GM12878 (cell line): ENCODE measurements at regions of chr18 and their contacts with region 1.

Region 1: DNA sequence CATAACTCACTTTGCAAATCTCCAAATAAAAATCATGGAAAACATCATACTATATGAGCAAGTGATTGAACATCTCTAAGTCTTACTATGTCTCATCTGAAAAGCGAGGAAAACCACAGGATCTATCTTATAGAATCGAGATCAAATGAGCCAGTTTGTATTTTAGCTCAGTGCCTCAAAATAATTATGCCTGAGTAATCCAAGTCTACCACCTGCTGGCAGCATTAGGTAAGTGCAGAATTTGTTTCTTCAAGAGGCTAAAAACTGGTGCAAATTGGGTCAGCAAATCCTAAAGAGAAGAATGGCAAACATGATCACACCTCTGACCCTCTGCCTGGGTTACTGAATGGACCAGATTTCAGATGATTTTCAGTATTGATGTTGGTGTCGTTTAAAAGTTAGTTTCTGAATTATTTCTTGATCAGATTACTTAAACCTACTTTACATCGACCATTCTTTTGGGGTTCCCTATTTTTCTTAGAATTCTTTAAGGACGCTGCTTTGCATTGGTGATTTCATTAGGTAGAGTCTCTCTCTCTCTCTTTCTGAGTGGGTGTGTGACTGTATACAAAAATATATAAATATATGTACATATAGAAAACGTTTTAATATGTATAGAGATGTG is 12.7 kb upstream of the FHOD3 start:
- DNase-seq: peak; percentile 40
- ATAC-seq: peak; percentile 83
- H3K4me3 ChIP-seq: no peak overlapping the region
- H3K27ac ChIP-seq: no peak overlapping the region
- H3K4me1 ChIP-seq: no peaks in the 10 kb centered on the region
- H3K27me3 ChIP-seq: peaks cover 0 to 2% of the 10 kb centered on the region in 2 experiments; a peak in 2 of 4 replicates
- CTCF ChIP-seq: peak; percentile 76 to 92 (median 83)
- EP300 ChIP-seq: no peak
- POLR2A ChIP-seq: no peak
- RAD21 ChIP-seq: peak; percentile 99

Region 2: DNA sequence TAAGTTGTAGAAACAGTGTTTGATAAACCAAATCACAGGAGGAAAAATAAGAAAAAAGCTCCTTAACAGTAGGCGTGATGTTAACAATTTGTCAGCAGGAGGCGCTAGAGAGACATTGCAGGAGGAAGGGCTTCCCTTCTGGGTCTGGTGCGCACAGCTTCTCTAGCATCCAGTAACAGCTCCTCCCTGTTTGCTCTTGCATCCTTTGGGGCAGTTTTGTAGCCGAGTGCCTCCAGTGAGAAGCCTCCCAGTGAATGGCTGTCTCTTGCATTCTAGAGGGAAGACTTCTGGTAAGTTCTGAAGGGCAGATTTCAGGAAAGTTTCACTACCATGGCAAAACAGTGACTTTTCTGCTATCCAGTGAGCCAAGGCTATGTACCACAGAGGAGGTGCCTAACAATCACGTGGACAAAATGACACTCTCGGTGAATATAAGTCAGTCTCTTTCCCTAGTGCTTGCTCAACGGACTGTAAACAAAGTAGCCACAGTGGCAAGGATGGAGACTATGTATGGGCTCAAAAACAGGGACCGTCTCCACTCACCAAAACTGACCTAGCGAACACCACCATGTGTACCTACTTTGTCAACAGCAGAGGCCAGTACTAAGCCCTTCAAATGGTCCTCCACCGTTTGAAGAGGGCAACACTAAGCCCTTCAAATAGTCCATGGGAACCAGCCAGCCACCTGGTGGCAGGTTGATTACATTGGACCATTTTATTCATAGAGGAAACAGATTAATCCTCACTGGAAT is 898.0 kb before region 1 on chr18:
- CTCF ChIA-PET with region 1: interaction called, 8 read pairs
- POLR2A ChIA-PET with region 1: no interaction called
- RAD21 ChIA-PET with region 1: interaction called, 13 read pairs
- SMC1A ChIA-PET with region 1: interaction called, 7 read pairs
- in situ Hi-C with region 1: loop called (anchors 10 kb)
- intact Hi-C with region 1: no loop called
- DNase-seq: no peak
- ATAC-seq: peak; percentile 90
- H3K4me3 ChIP-seq: no peak overlapping the region
- H3K27ac ChIP-seq: no peak overlapping the region
- H3K4me1 ChIP-seq: no peaks in the 10 kb centered on the region
- H3K27me3 ChIP-seq: 0 out of 4 replicates have a peak, but pooled peaks cover 0 to 3% of the 10 kb centered on the region in 2 experiments
- CTCF ChIP-seq: peak; percentile 88 to 92 (median 89)
- EP300 ChIP-seq: no peak
- POLR2A ChIP-seq: no peak
- RAD21 ChIP-seq: peak; percentile 85

Region 3: GRCh38 chr18:36025025-36025424 is 259.8 kb before region 1 on chr18:
- CTCF ChIA-PET with region 1: interaction called, 16 read pairs
- POLR2A ChIA-PET with region 1: no interaction called
- RAD21 ChIA-PET with region 1: interaction called, 4 read pairs
- SMC1A ChIA-PET with region 1: interaction called, 91 read pairs
- in situ Hi-C with region 1: no loop called
- intact Hi-C with region 1: no loop called
- DNase-seq: no peak
- ATAC-seq: no peak
- H3K4me3 ChIP-seq: no peak overlapping the region
- H3K27ac ChIP-seq: no peak overlapping the region
- H3K4me1 ChIP-seq: no peaks in the 10 kb centered on the region
- H3K27me3 ChIP-seq: no peaks in the 10 kb centered on the region
- CTCF ChIP-seq: no peak
- EP300 ChIP-seq: no peak
- POLR2A ChIP-seq: no peak
- RAD21 ChIP-seq: no peak

Region 4: GRCh38 chr18:36129300-36130038 is 155.3 kb before region 1 on chr18 and contains the starts of genes ELP2 and SLC39A6:
- CTCF ChIA-PET with region 1: interaction called, 12 read pairs
- POLR2A ChIA-PET with region 1: no interaction called
- RAD21 ChIA-PET with region 1: interaction called, 11 read pairs
- SMC1A ChIA-PET with region 1: interaction called, 4 read pairs
- in situ Hi-C with region 1: no loop called
- intact Hi-C with region 1: no loop called
- DNase-seq: peak; percentile 76
- ATAC-seq: peak; percentile 93
- H3K4me3 ChIP-seq: peak within 1 kb of the TSS; percentile 85
- H3K27ac ChIP-seq: peak within 1 kb of the TSS; percentile 98
- H3K4me1 ChIP-seq: peaks cover 7% of the 10 kb centered on the region; the same call in 1 of the 2 replicates
- H3K27me3 ChIP-seq: no peaks in the 10 kb centered on the region
- CTCF ChIP-seq: 0 out of 6 replicates have a peak, but pooled peaks of 1 of the 3 experiments have one; percentile 1
- EP300 ChIP-seq: no peak
- POLR2A ChIP-seq: peak; percentile 94
- RAD21 ChIP-seq: no peak
- polyA plus RNA-seq, gene ELP2: 90.6 to 90.7 TPM
- polyA plus RNA-seq, gene SLC39A6: 12.4 to 19.5 TPM

Region 5: DNA sequence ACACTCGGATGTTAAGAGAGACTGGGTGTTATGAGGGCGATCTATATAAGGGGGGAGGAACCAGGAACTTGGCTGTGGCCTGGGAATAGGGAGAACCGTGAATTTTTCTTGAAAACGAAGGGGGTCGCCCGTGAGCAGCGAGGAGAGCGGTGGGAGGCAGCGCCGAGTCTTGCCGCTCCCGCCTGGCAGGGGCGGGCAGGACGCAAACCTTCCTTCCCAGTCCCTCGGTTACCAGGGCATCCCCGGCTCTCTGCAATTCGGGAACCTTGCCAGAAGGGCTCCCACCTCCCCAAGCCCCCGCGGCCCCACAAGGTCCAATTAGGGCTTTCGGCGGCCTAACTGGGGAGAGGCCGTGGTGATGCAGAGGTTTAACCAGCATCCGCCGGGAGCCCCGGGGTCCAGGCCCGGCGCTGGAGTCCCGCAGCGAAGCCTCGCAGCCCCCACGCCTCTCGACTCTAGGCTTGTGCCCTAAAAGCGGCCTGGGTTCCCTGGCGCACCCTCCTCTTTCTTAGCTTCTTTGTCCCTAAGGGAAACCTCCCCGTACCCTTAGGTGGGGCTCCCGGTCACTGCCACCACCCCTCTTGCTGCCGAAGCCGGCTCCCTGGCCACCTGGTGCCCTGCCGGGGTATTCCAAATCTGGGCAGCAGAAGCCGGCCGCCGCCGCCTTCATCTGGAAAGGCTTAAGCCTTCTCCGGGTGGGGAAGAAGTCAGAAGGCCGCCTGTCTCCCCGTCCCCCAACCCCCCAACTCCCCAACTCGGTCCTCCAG is 12.1 kb after region 1 on chr18:
- CTCF ChIA-PET with region 1: interaction called, 11 read pairs
- POLR2A ChIA-PET with region 1: interaction called, 3 read pairs
- RAD21 ChIA-PET with region 1: interaction called, 9 read pairs
- SMC1A ChIA-PET with region 1: interaction called, 7 read pairs
- in situ Hi-C with region 1: no loop called
- intact Hi-C with region 1: no loop called
- DNase-seq: no peak
- ATAC-seq: peak; percentile 49
- H3K4me3 ChIP-seq: peak overlapping the region; percentile 69
- H3K27ac ChIP-seq: no peak overlapping the region
- H3K4me1 ChIP-seq: no peaks in the 10 kb centered on the region
- H3K27me3 ChIP-seq: peaks cover 0 to 4% of the 10 kb centered on the region in 2 experiments; a peak in 1 of 4 replicates
- CTCF ChIP-seq: peak; percentile 17 to 56 (median 34); a peak in 4 of 6 replicates
- EP300 ChIP-seq: no peak
- POLR2A ChIP-seq: no peak
- RAD21 ChIP-seq: peak; percentile 40; the same call in 1 of the 2 replicates

Region 6: DNA sequence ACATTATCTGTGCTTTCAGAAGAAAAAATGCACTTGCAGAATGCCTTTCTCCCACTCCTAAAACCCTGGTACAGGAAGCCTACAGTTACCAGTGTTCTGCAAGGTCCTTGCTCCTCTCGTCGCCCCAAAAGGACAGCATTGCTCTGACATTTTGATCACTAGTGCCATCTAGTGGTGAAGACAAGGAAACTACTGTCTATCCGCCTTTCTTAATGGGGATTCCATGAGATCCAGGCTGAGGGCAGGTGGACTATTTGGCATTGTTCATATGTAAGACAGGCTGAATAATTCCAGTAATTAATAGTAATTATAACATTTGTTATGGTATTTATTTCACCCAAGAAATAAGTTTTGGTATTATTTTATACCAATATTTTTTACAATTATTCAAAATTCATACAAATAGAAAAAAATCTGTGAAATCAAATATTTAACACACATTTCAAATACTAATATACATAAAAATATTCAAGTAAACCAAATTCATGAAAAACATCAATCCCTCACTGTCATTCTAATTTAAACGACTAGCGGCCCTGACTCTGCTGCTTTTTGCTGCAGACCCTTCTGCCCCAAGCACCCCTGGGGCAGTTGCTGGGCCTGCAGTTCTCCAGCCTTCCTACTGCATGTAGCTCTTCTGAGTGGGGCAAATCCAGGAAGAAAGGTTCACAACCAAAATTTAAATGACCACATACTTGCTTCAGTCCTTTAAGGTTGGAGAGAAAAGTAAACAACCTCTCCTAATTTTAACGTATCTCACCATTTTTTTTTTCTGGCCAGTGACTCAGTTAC is 525.0 kb after region 1 on chr18:
- CTCF ChIA-PET with region 1: no interaction called
- POLR2A ChIA-PET with region 1: no interaction called
- RAD21 ChIA-PET with region 1: interaction called, 3 read pairs
- SMC1A ChIA-PET with region 1: interaction called, 6 read pairs
- in situ Hi-C with region 1: no loop called
- intact Hi-C with region 1: loop called (anchors 10 kb)
- DNase-seq: peak; percentile 27
- ATAC-seq: peak; percentile 99
- H3K4me3 ChIP-seq: no peak overlapping the region
- H3K27ac ChIP-seq: no peak overlapping the region
- H3K4me1 ChIP-seq: no peaks in the 10 kb centered on the region
- H3K27me3 ChIP-seq: no peaks in the 10 kb centered on the region
- CTCF ChIP-seq: peak; percentile 75 to 86 (median 80)
- EP300 ChIP-seq: no peak
- POLR2A ChIP-seq: no peak
- RAD21 ChIP-seq: peak; percentile 78